Heart left ventricle (tissue), 16 donors: ENCODE measurements at regions of chr4 and their contacts with region 1.

Region 1: DNA sequence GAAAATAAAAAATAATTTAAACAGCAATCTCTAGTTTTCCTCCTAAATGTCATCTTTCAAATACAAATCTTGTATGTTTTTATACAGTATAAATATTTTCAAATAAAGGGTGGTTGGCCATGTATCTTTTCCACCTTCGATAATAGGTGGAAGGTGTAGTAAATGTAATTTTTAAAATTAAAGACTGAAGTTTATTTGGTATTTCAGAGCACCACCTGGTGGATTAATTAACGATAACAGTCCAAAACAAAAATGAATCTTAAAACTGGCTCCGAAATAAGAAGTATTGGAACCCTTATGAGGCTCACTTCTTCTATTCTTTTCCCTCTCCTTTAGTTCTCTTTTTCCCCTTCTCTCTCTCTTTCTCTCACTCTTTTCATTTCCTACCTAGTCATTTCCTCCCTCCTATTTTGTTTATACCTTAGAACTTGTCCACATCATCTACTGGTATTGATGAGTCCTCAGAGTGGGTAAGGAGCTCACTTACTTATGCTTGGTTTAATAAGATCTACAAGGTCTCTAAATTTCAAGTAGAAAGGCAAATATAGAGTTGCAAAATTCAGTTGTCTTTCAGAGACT is 82.9 kb upstream of the EXOC1L start:
- DNase-seq: no peak
- ATAC-seq: no peak
- H3K4me3 ChIP-seq: no peak overlapping the region
- H3K27ac ChIP-seq: no peak overlapping the region
- H3K4me1 ChIP-seq: no peaks in the 10 kb centered on the region
- H3K27me3 ChIP-seq: peaks cover 0 to 12% (median 0%) of the 10 kb centered on the region in 9 donors
- CTCF ChIP-seq: peak in 8 of 12 donors; percentile 10 to 48 (median 36)
- POLR2A ChIP-seq: no peak

Region 2: GRCh38 chr4:54971474-54971950 is 765.2 kb before region 1 on chr4:
- intact Hi-C with region 1: loop called in 3 of 10 experiments (anchors 10 kb)
- DNase-seq: no peak
- ATAC-seq: peak in 3 of 4 donors; percentile 65 to 85 (median 69)
- H3K4me3 ChIP-seq: no peak overlapping the region
- H3K27ac ChIP-seq: no peak overlapping the region
- H3K4me1 ChIP-seq: peaks cover 0 to 3% (median 0%) of the 10 kb centered on the region in 12 donors
- H3K27me3 ChIP-seq: no peaks in the 10 kb centered on the region
- CTCF ChIP-seq: peak; percentile 58 to 82 (median 74)
- POLR2A ChIP-seq: no peak

Region 3: GRCh38 chr4:55345980-55346850 is 390.5 kb before region 1 on chr4 and contains the start of gene SRD5A3:
- intact Hi-C with region 1: loop called in 4 of 10 experiments (anchors 1 to 10 kb)
- DNase-seq: peak; percentile 86 to 94 (median 88)
- ATAC-seq: peak; percentile 94 to 98 (median 96)
- H3K4me3 ChIP-seq: peak within 1 kb of the TSS; percentile 48 to 97 (median 80)
- H3K27ac ChIP-seq: peak within 1 kb of the TSS; percentile 89 to 100 (median 98)
- H3K4me1 ChIP-seq: peaks cover 4 to 31% (median 16%) of the 10 kb centered on the region in 12 donors
- H3K27me3 ChIP-seq: no peaks in the 10 kb centered on the region
- CTCF ChIP-seq: peak; percentile 90 to 99 (median 98)
- POLR2A ChIP-seq: peak in 1 of 2 donors; percentile 72
- total RNA-seq, gene SRD5A3: 4.5 to 16.8 (median 7.8) TPM

Region 4: DNA sequence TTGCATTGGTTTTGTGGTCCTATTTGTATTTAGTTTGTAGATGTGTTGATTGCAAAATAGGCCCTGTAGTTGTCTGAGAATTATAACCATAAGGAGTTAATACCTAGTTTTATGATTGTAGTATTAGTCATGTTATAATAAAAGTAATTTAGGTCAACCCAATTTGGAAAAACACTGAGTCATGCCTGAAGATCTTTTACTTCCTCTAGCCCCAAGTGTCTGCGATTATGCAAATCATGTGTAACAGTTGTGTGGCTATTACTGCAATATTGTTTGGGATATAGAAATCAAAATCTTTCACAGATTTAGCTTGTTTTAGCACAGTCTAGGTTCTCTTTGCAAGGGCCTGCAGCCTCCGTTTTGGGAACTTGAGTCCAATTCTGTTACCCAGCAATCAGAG is 378.0 kb before region 1 on chr4:
- intact Hi-C with region 1: loop called in 1 of 10 experiments (anchors 10 kb)
- DNase-seq: no peak
- ATAC-seq: peak in 3 of 4 donors; percentile 64 to 83 (median 72)
- H3K4me3 ChIP-seq: no peak overlapping the region
- H3K27ac ChIP-seq: peak overlapping the region in 11 of 12 donors; percentile 43 to 77 (median 63)
- H3K4me1 ChIP-seq: peaks cover 0 to 30% (median 14%) of the 10 kb centered on the region in 12 donors
- H3K27me3 ChIP-seq: no peaks in the 10 kb centered on the region
- CTCF ChIP-seq: no peak
- POLR2A ChIP-seq: no peak